CD4-positive, alpha-beta memory T cell (primary cell): ENCODE measurements at regions of chr1 and their contacts with region 1.

Region 1: GRCh38 chr1:40161125-40161887 is at the start of gene RLF:
- DNase-seq: peak; percentile 93 to 95 (median 94)
- H3K4me3 ChIP-seq: peak within 1 kb of the TSS; percentile 77 to 94
- H3K4me3 Mint-ChIP-seq: peak within 1 kb of the TSS in 1 of 8 donors; percentile 60
- H3K27ac ChIP-seq: peak within 1 kb of the TSS; percentile 97
- H3K27ac Mint-ChIP-seq: peak within 1 kb of the TSS in 1 of 7 donors; percentile 99
- H3K4me1 ChIP-seq: peaks cover 49% of the 10 kb centered on the region
- H3K4me1 Mint-ChIP-seq: peaks cover 8 to 29% (median 19%) of the 10 kb centered on the region in 4 donors
- H3K27me3 ChIP-seq: no peaks in the 10 kb centered on the region
- H3K27me3 Mint-ChIP-seq: no peaks in the 10 kb centered on the region
- total RNA-seq, gene RLF: 23.0 to 23.4 TPM

Region 2: GRCh38 chr1:40257688-40258444 is 96.6 kb after region 1 on chr1 and contains the start of gene ZMPSTE24:
- CTCF ChIA-PET with region 1: interaction called, 3 read pairs
- POLR2A ChIA-PET with region 1: interaction called, 18 read pairs
- intact Hi-C with region 1: loop called (anchors 1 kb)
- DNase-seq: peak; percentile 95 to 99 (median 96)
- H3K4me3 ChIP-seq: peak within 1 kb of the TSS; percentile 86 to 99
- H3K4me3 Mint-ChIP-seq: peak within 1 kb of the TSS; percentile 92 to 99 (median 96)
- H3K27ac ChIP-seq: peak within 1 kb of the TSS; percentile 98
- H3K27ac Mint-ChIP-seq: peak within 1 kb of the TSS; percentile 98 to 100 (median 99)
- H3K4me1 ChIP-seq: peaks cover 37% of the 10 kb centered on the region
- H3K4me1 Mint-ChIP-seq: peaks cover 25 to 58% (median 38%) of the 10 kb centered on the region in 4 donors
- H3K27me3 ChIP-seq: no peaks in the 10 kb centered on the region
- H3K27me3 Mint-ChIP-seq: no peaks in the 10 kb centered on the region
- total RNA-seq, gene ZMPSTE24: 19.7 to 21.0 TPM

Region 3: GRCh38 chr1:40373338-40374283 is 212.3 kb after region 1 on chr1 and contains the start of gene SMAP2:
- CTCF ChIA-PET with region 1: no interaction called
- POLR2A ChIA-PET with region 1: interaction called, 10 read pairs
- intact Hi-C with region 1: no loop called
- DNase-seq: peak; percentile 94 to 96 (median 96)
- H3K4me3 ChIP-seq: peak within 1 kb of the TSS; percentile 84 to 90
- H3K4me3 Mint-ChIP-seq: peak within 1 kb of the TSS; percentile 98 to 100 (median 99)
- H3K27ac ChIP-seq: peak within 1 kb of the TSS; percentile 96
- H3K27ac Mint-ChIP-seq: peak within 1 kb of the TSS; percentile 97 to 100 (median 99)
- H3K4me1 ChIP-seq: peaks cover 45% of the 10 kb centered on the region
- H3K4me1 Mint-ChIP-seq: peaks cover 31 to 67% (median 49%) of the 10 kb centered on the region in 4 donors
- H3K27me3 ChIP-seq: no peaks in the 10 kb centered on the region
- H3K27me3 Mint-ChIP-seq: peaks cover 0 to 6% of the 10 kb centered on the region in 2 donors
- total RNA-seq, gene SMAP2: 123 TPM